A673 (cell line): ENCODE measurements at regions of chr15 and their contacts with region 1.

Region 1: DNA sequence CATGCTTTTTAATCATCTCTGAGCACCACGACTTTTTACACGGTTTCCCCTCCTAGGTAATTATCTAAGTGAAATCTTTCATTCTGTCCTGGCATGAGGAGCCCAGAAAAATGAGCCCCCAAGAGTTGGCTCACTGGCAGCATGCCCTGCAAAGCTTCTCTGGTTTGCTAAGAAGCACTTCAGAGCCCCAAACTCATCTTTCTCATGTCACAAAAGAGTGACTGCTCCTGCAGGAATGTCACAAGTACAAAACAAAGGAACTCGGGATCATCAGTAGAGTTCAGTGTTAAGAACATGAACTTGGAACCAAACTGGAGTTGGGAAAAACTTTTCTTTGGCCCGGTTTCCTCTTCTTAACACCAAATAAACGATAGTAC is 123.9 kb downstream of the FOXB1 start:
- DNase-seq: no peak
- H3K4me3 ChIP-seq: peak overlapping the region; percentile 42
- H3K27ac ChIP-seq: no peak overlapping the region
- H3K4me1 ChIP-seq: no peaks in the 10 kb centered on the region
- H3K27me3 ChIP-seq: peaks cover 4% of the 10 kb centered on the region
- CTCF ChIP-seq: no peak

Region 2: DNA sequence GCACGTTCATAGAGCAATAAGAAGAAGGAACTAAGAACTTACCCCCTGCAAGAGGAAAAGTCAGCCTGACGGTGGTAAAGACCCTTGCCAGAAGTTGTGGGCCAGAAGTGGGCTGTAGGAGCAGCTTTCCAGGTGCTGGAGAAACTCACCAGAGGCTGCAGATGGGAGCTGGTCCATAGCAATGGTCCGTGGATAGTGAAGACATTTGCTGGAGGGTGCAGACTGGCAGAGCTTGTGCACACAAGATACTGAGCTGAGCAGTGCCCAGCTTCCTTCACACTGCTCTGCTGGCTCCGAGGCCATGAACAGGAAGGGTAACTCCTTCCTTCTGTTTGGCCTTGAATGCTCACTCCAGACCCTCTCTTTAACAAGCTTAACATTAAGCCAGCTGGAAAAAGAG is 289.1 kb before region 1 on chr15:
- CTCF ChIA-PET with region 1: no interaction called
- POLR2A ChIA-PET with region 1: no interaction called
- intact Hi-C with region 1: no loop called
- DNase-seq: no peak
- H3K4me3 ChIP-seq: no peak overlapping the region
- H3K27ac ChIP-seq: no peak overlapping the region
- H3K4me1 ChIP-seq: no peaks in the 10 kb centered on the region
- H3K27me3 ChIP-seq: peaks cover 66% of the 10 kb centered on the region
- CTCF ChIP-seq: no peak

Region 3: GRCh38 chr15:60000113-60000823 is 127.7 kb before region 1 on chr15:
- CTCF ChIA-PET with region 1: interaction called, 10 read pairs
- POLR2A ChIA-PET with region 1: no interaction called
- intact Hi-C with region 1: no loop called
- DNase-seq: no peak
- H3K4me3 ChIP-seq: no peak overlapping the region
- H3K27ac ChIP-seq: no peak overlapping the region
- H3K4me1 ChIP-seq: peaks cover 18% of the 10 kb centered on the region
- H3K27me3 ChIP-seq: peaks cover 99% of the 10 kb centered on the region
- CTCF ChIP-seq: no peak

Region 4: GRCh38 chr15:60138397-60138968 is 10.5 kb after region 1 on chr15:
- CTCF ChIA-PET with region 1: no interaction called
- POLR2A ChIA-PET with region 1: no interaction called
- intact Hi-C with region 1: no loop called
- DNase-seq: no peak
- H3K4me3 ChIP-seq: no peak overlapping the region
- H3K27ac ChIP-seq: no peak overlapping the region
- H3K4me1 ChIP-seq: no peaks in the 10 kb centered on the region
- H3K27me3 ChIP-seq: peaks cover 69% of the 10 kb centered on the region
- CTCF ChIP-seq: no peak

Region 5: GRCh38 chr15:60155666-60156065 is 27.7 kb after region 1 on chr15:
- CTCF ChIA-PET with region 1: no interaction called
- POLR2A ChIA-PET with region 1: no interaction called
- intact Hi-C with region 1: no loop called
- DNase-seq: no peak
- H3K4me3 ChIP-seq: no peak overlapping the region
- H3K27ac ChIP-seq: no peak overlapping the region
- H3K4me1 ChIP-seq: no peaks in the 10 kb centered on the region
- H3K27me3 ChIP-seq: peaks cover 32% of the 10 kb centered on the region
- CTCF ChIP-seq: no peak

Region 6: GRCh38 chr15:60374628-60375081 is 246.7 kb after region 1 on chr15:
- CTCF ChIA-PET with region 1: no interaction called
- POLR2A ChIA-PET with region 1: no interaction called
- intact Hi-C with region 1: no loop called
- DNase-seq: peak; percentile 90
- H3K4me3 ChIP-seq: no peak overlapping the region
- H3K27ac ChIP-seq: peak overlapping the region; percentile 73
- H3K4me1 ChIP-seq: peaks cover 81% of the 10 kb centered on the region
- H3K27me3 ChIP-seq: no peaks in the 10 kb centered on the region
- CTCF ChIP-seq: no peak